B cell (primary cell): ENCODE measurements at regions of chr6 and their contacts with region 1.

Region 1: DNA sequence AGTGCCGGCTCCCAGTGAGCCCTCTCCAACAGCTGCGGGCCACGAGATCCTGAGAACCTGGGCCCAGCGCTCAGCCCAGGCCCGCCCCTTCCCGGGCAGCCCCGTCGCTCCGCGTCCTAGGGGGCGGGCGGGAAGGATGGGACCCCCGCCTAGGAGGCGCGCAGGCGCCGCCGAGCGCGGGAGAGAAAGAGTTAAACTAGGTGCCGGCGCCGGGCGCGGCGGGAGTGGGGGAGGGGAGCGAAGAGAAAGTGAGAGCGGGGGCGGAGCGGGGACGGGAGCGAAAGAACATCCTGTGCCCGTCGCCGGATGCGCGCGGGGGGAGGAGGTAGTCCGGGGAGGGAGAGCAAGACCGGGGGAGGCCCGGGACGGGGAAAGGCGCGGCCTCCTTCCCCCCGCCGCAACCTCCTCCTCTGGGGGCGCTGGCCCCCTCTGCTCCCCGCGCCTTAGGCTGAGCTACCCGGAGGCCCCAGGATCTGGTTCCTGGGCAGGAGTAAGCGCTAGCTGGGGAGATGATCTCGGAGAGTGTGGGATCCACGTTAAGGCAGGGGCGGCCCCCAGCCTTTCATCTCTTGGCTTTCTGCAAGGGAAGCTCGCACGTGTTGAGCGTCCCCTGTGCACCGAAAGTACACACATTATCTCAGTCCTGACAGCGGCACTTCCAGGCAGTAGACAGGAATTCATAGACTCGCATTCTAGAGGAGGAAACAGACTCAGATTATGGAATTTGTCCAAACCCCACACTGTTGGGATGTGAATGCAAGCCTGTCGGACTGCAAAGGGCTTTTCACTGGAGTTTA is 4.9 kb upstream of the ARMC12 start:
- DNase-seq: peak; percentile 95
- ATAC-seq: peak; percentile 64
- H3K4me3 ChIP-seq: peak overlapping the region; percentile 39 to 99 (median 92)
- H3K4me3 Mint-ChIP-seq: peak overlapping the region; percentile 94
- H3K27ac ChIP-seq: peak overlapping the region; percentile 94 to 99
- H3K27ac Mint-ChIP-seq: peak overlapping the region; percentile 96
- H3K4me1 ChIP-seq: peaks cover 51 to 61% of the 10 kb centered on the region in 2 donors
- H3K4me1 Mint-ChIP-seq: peaks cover 60% of the 10 kb centered on the region
- H3K27me3 ChIP-seq: peaks cover 0 to 1% (median 0%) of the 10 kb centered on the region in 4 experiments
- H3K27me3 Mint-ChIP-seq: peaks cover under 1% of the 10 kb centered on the region
- CTCF ChIP-seq: peak; percentile 11

Region 2: DNA sequence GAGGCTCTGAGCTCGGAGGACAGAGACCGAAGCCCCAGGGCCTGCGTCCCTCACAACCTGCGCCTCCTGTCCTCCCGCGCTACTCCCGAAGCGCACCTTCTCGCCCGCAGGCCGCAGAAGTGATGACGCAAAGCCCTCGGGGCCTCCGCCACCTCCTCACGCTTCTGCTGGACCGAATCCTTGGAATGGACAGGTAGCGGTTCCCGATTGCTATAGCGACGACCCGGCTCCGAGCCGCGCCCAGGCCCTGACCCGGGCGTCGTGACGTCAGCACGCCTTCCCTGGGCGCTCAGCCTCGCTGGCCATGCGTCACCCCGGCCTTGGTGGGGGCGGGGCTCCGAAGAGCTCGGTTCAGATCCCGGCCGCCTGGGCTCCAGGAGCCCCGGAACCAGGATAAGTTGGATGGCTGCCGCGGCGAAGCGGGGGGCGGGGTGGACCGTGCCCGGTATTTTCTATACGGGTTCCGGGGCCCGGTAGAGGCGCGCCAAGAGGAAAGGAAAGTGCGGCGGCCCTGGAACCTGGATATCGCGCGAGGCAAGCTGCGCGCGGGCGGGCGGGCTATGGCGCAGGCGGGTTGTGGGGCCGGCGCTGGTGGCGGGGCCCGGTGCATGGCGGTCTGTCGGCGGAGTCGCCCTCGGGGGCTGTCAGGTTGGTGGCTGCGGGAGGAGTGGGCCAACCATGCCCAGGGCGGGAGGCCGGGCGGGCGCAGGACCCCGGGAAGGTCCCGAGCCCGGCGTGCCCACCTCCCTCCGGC is 472.6 kb before region 1 on chr6 and contains the start of gene ZNF76:
- CTCF ChIA-PET with region 1: no interaction called
- POLR2A ChIA-PET with region 1: no interaction called
- intact Hi-C with region 1: loop called (anchors 2 kb)
- DNase-seq: peak; percentile 97
- ATAC-seq: peak; percentile 81
- H3K4me3 ChIP-seq: peak within 1 kb of the TSS; percentile 63 to 90 (median 81)
- H3K4me3 Mint-ChIP-seq: peak within 1 kb of the TSS; percentile 99
- H3K27ac ChIP-seq: peak within 1 kb of the TSS; percentile 97 to 98
- H3K27ac Mint-ChIP-seq: peak within 1 kb of the TSS; percentile 98
- H3K4me1 ChIP-seq: peaks cover 21 to 30% of the 10 kb centered on the region in 2 donors
- H3K4me1 Mint-ChIP-seq: peaks cover 47% of the 10 kb centered on the region
- H3K27me3 ChIP-seq: no peaks in the 10 kb centered on the region
- H3K27me3 Mint-ChIP-seq: no peaks in the 10 kb centered on the region
- CTCF ChIP-seq: no peak
- total RNA-seq, gene ZNF76: 96.9 and 107 TPM in 2 replicates

Region 3: DNA sequence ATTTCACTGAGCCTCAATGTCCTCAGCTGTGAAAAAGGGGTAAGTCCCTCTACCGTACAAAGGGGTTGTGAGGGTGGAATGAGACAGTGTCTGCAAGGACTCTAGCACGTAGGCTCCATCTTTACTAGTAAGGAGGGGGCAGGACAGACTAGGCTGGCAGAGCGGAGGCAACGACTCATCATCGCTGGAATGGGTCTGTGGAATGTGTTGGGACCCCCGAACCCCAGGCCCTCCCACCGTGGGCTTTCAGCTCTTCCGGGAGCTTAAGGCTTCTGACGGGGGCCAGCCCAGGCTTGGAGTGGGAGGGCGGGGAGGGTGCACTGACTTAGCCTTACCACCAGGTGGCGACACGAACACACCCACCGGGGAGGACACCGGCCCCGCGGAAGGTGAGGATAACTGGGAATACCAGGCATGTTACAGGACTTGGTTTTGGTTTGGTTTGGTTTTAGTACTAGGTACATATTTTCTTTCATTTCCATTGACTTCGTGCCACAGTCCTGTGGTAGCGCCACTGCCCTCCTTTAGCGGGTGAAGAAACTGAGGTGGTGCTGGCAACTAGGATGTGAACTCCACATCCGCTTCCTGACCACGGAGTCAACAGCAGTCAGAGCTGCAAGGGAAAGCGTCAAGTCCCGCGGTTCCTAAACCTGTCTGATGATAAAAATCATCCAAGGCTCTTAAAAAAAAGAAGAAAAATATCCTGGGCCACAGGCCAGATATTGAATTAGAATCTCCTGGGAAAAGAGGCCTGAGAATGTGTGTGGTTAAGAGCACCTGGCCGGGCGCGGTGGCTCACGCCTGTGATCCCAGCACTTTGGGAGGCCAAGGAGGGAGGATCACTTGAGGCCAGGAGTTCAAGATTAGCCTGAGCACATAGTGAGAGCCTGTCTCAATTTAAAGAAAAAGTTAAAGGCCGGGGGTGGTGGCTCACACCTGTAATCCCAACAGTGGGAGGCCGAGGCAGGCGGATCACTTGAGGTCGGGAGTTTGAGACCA is 209.0 kb before region 1 on chr6:
- CTCF ChIA-PET with region 1: interaction called, 119 read pairs
- POLR2A ChIA-PET with region 1: no interaction called
- intact Hi-C with region 1: no loop called
- DNase-seq: peak; percentile 80
- ATAC-seq: peak; percentile 92
- H3K4me3 ChIP-seq: peak overlapping the region; percentile 14 to 50 (median 41)
- H3K4me3 Mint-ChIP-seq: peak overlapping the region; percentile 77
- H3K27ac ChIP-seq: no peak overlapping the region
- H3K27ac Mint-ChIP-seq: no peak overlapping the region
- H3K4me1 ChIP-seq: peaks cover 3 to 9% of the 10 kb centered on the region in 2 donors
- H3K4me1 Mint-ChIP-seq: peaks cover 9% of the 10 kb centered on the region
- H3K27me3 ChIP-seq: peaks cover 0 to 5% (median 0%) of the 10 kb centered on the region in 4 experiments
- H3K27me3 Mint-ChIP-seq: no peaks in the 10 kb centered on the region
- CTCF ChIP-seq: peak; percentile 98

Region 4: GRCh38 chr6:35583893-35584688 is 147.8 kb before region 1 on chr6:
- CTCF ChIA-PET with region 1: interaction called, 369 read pairs
- POLR2A ChIA-PET with region 1: interaction called, 4 read pairs
- intact Hi-C with region 1: loop called (anchors 1 kb)
- DNase-seq: peak; percentile 82
- ATAC-seq: peak; percentile 63
- H3K4me3 ChIP-seq: no peak overlapping the region
- H3K4me3 Mint-ChIP-seq: no peak overlapping the region
- H3K27ac ChIP-seq: no peak overlapping the region
- H3K27ac Mint-ChIP-seq: no peak overlapping the region
- H3K4me1 ChIP-seq: no peaks in the 10 kb centered on the region
- H3K4me1 Mint-ChIP-seq: peaks cover 5% of the 10 kb centered on the region
- H3K27me3 ChIP-seq: no peaks in the 10 kb centered on the region
- H3K27me3 Mint-ChIP-seq: no peaks in the 10 kb centered on the region
- CTCF ChIP-seq: peak; percentile 91

Region 5: GRCh38 chr6:35642471-35643161 is 89.3 kb before region 1 on chr6:
- CTCF ChIA-PET with region 1: interaction called, 22 read pairs
- POLR2A ChIA-PET with region 1: no interaction called
- intact Hi-C with region 1: no loop called
- DNase-seq: no peak
- ATAC-seq: no peak
- H3K4me3 ChIP-seq: no peak overlapping the region
- H3K4me3 Mint-ChIP-seq: no peak overlapping the region
- H3K27ac ChIP-seq: no peak overlapping the region
- H3K27ac Mint-ChIP-seq: no peak overlapping the region
- H3K4me1 ChIP-seq: no peaks in the 10 kb centered on the region
- H3K4me1 Mint-ChIP-seq: no peaks in the 10 kb centered on the region
- H3K27me3 ChIP-seq: no peaks in the 10 kb centered on the region
- H3K27me3 Mint-ChIP-seq: no peaks in the 10 kb centered on the region
- CTCF ChIP-seq: no peak

Region 6: DNA sequence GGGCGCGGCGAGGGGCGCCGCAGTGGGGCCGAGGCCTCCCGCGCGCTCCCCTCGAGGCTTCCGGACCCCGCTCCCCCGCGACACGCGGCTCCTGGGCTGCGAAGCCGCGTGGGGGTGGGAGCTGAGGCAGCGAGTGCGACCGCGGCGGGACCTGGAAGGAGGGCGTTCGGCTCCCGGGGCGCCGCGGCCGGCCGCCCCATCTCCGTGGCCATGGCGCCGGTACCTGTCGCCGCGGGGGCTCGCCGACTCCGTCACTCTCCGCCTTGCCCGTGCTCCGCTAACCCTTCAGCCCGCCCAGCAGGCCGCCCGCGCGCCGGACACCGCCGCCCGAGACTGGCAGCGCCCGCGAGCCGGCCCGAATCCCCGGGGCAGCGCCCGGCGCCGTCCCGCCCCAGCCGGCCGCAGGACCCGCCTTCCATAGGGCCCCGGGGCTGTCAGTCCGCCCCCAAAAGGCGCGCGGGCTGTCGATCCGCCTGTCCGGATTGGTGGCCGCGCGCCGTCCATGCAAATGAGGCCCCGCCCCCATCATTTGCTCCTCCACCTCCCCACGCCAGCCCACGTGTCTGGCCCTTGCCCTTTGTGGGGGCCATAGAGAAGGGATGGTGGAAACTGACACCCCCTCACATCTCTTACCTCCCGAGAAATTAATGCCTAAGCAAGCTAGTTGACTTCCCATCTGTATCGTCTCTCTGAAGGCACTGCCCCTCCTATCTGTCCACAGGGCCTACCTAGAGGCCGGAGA is 43.2 kb before region 1 on chr6 and contains the start of gene FKBP5:
- CTCF ChIA-PET with region 1: interaction called, 16 read pairs
- POLR2A ChIA-PET with region 1: interaction called, 5 read pairs
- intact Hi-C with region 1: loop called (anchors 1 kb)
- DNase-seq: peak; percentile 91
- ATAC-seq: peak; percentile 95
- H3K4me3 ChIP-seq: peak within 1 kb of the TSS; percentile 55 to 82 (median 73)
- H3K4me3 Mint-ChIP-seq: peak within 1 kb of the TSS; percentile 97
- H3K27ac ChIP-seq: peak within 1 kb of the TSS; percentile 25 to 60
- H3K27ac Mint-ChIP-seq: peak within 1 kb of the TSS; percentile 89
- H3K4me1 ChIP-seq: peaks cover 5 to 11% of the 10 kb centered on the region in 2 donors
- H3K4me1 Mint-ChIP-seq: peaks cover 17% of the 10 kb centered on the region
- H3K27me3 ChIP-seq: no peaks in the 10 kb centered on the region
- H3K27me3 Mint-ChIP-seq: no peaks in the 10 kb centered on the region
- CTCF ChIP-seq: no peak
- total RNA-seq, gene FKBP5: 7.4 and 8.1 TPM in 2 replicates

Region 7: DNA sequence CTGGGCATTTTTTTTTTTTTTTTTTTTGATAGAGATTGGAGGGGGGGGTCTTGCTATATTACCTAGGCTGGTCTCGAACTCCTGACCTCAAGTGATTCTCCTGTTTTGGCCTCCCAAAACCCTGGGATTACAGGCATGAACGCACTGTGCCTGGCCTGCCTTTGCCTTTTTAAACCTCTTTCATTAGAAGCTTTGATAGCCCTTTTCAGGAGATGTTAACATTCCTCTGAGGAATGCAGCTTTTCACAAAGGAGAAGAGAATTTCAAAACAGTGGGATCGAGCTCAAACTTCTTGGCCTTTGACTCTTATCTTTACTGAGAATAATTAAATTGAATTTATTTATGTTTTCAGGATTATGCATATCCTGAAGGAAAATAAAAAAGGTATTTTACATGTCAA is 261.2 kb after region 1 on chr6:
- CTCF ChIA-PET with region 1: no interaction called
- POLR2A ChIA-PET with region 1: no interaction called
- intact Hi-C with region 1: no loop called
- DNase-seq: no peak
- ATAC-seq: no peak
- H3K4me3 ChIP-seq: no peak overlapping the region
- H3K4me3 Mint-ChIP-seq: no peak overlapping the region
- H3K27ac ChIP-seq: no peak overlapping the region
- H3K27ac Mint-ChIP-seq: no peak overlapping the region
- H3K4me1 ChIP-seq: no peaks in the 10 kb centered on the region
- H3K4me1 Mint-ChIP-seq: no peaks in the 10 kb centered on the region
- H3K27me3 ChIP-seq: no peaks in the 10 kb centered on the region
- H3K27me3 Mint-ChIP-seq: peaks cover 15% of the 10 kb centered on the region
- CTCF ChIP-seq: no peak